ENCODE measurements at regions of chr16 and their contacts with region 1.

Region 1: GRCh38 chr16:76885776-76886537 is 305.0 kb upstream of the MON1B start:
- DNase-seq: no peak
- H3K4me3 ChIP-seq: no peak overlapping the region
- H3K27ac ChIP-seq: peak overlapping the region in 24 of 59 donors; percentile 2 to 72 (median 45)
- H3K27me3 ChIP-seq: no peaks in the 10 kb centered on the region
- CTCF ChIP-seq: no peak

Region 2: GRCh38 chr16:76450890-76451289 is 435.1 kb before region 1 on chr16:
- intact Hi-C with region 1: no loop called
- DNase-seq: no peak
- H3K4me3 ChIP-seq: no peak overlapping the region
- H3K27ac ChIP-seq: peak overlapping the region in 14 of 59 donors; percentile 6 to 57 (median 22)
- H3K27me3 ChIP-seq: no peaks in the 10 kb centered on the region
- CTCF ChIP-seq: no peak

Region 3: DNA sequence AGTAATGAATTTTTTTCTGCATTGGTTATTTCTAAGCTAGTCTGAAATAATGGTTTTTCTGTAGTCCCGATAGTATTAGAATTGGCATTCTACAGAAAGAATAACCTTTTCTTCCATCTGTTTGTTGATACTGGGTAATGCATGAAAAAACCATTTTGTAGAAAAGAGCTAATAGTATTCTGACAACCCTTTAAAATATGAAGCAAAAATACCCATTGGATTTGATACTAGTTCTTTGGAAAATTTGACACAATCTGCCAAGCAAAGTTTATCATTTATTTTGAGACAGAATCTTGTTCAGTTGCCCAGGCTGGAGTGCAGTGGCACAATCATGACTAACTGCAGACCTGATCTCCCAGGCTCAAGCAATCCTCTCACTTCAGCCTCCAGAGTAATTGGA is 61.7 kb before region 1 on chr16:
- intact Hi-C with region 1: no loop called
- DNase-seq: no peak
- H3K4me3 ChIP-seq: no peak overlapping the region
- H3K27ac ChIP-seq: no peak overlapping the region
- H3K27me3 ChIP-seq: peaks cover 0 to 7% (median 0%) of the 10 kb centered on the region in 45 donors
- CTCF ChIP-seq: no peak

Region 4: GRCh38 chr16:76943877-76944276 is 57.9 kb after region 1 on chr16:
- intact Hi-C with region 1: loop called in 1 of 2 experiments (anchors 5 kb)
- DNase-seq: no peak
- H3K4me3 ChIP-seq: no peak overlapping the region
- H3K27ac ChIP-seq: no peak overlapping the region
- H3K27me3 ChIP-seq: peaks cover 0 to 37% (median 0%) of the 10 kb centered on the region in 45 donors
- CTCF ChIP-seq: no peak

Measured in dorsolateral prefrontal cortex (tissue), 120 donors.